ENCODE measurements at regions of chr17 and their contacts with region 1.

Region 1: DNA sequence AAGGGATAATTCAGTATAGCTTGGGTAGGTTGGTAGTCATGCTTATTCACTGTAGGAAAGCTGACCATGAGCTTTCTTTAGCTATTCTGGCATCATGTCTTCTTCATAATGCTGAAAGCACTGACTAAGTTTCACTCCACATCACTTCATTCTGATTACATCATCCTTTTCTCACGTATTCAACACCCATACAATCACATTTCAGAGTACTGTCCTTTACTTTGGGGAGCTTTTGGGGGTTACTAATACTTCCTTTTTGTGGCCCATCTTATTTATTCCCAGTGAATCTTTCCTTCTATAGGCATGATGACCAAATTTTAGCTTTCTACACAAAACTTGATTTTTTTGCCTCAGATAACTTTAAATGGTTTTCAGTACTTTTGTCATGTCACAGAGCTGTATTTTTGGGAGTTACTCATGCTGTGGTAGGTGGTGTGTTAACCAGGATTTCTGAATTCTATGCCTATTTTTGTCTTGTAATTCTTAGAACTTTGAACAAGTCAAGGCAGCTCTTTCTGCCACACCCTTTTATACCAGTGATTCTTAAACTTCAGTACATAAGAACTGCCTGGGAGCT is 23.5 kb downstream of the TADA2A start:
- DNase-seq: no peak
- ATAC-seq: no peak
- H3K4me3 ChIP-seq: no peak overlapping the region
- H3K27ac ChIP-seq: no peak overlapping the region
- H3K4me1 ChIP-seq: no peaks in the 10 kb centered on the region
- H3K27me3 ChIP-seq: no peaks in the 10 kb centered on the region
- CTCF ChIP-seq: no peak

Region 2: GRCh38 chr17:37218849-37219248 is 211.3 kb before region 1 on chr17:
- CTCF ChIA-PET with region 1: interaction called, 15 read pairs
- POLR2A ChIA-PET with region 1: no interaction called
- in situ Hi-C with region 1: no loop called
- intact Hi-C with region 1: no loop called
- DNase-seq: no peak
- ATAC-seq: no peak
- H3K4me3 ChIP-seq: no peak overlapping the region
- H3K27ac ChIP-seq: no peak overlapping the region
- H3K4me1 ChIP-seq: no peaks in the 10 kb centered on the region
- H3K27me3 ChIP-seq: no peaks in the 10 kb centered on the region
- CTCF ChIP-seq: no peak

Region 3: GRCh38 chr17:37392024-37392590 is 38.0 kb before region 1 on chr17:
- CTCF ChIA-PET with region 1: no interaction called
- POLR2A ChIA-PET with region 1: no interaction called
- in situ Hi-C with region 1: no loop called
- intact Hi-C with region 1: no loop called
- DNase-seq: no peak
- ATAC-seq: no peak
- H3K4me3 ChIP-seq: no peak overlapping the region
- H3K27ac ChIP-seq: peak overlapping the region; percentile 17; the same call in 1 of the 2 replicates
- H3K4me1 ChIP-seq: peaks cover 3% of the 10 kb centered on the region; the same call in 1 of the 2 replicates
- H3K27me3 ChIP-seq: no peaks in the 10 kb centered on the region
- CTCF ChIP-seq: no peak

Region 4: DNA sequence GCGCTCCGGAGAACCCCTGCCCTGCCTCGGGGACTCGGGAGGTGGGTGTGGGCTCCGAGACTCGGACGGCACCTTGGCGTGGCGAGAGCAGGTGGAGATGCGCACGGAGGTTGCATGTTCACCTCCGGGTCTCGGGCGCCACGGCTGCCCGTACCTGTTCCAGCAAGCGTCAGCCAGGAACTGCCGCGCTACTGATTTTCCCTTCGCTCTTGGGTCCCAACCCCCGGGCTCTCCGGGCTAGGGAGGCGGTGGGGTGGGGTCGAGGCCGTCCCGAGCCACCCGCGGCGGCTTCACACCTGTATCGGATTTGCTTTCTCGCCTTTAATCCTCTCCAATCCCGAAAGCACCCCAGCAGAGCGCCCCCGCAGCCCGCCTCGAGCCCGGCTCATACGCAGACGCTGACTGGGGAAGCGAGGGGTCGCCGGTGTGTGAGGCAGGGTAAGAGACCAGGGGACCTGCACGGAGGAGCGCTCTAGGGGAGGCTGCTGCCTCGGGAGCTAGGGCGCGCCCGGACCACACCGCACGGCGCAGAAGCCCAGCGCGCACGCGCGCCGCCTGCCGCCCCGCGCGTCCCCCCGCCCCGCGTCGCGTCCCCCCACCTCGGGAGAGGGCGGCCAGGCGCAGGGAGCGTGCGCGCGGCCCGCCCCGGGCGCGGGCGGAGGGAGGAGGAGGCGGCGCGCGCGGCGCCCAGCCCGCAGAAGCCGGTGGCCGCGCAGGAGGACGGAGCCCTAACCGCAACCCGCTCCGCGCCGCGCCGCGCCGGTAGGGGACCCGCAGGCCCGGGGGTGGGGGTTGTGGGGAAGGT is 59.3 kb after region 1 on chr17 and contains the start of gene DUSP14:
- CTCF ChIA-PET with region 1: no interaction called
- POLR2A ChIA-PET with region 1: no interaction called
- in situ Hi-C with region 1: no loop called
- intact Hi-C with region 1: no loop called
- DNase-seq: no peak
- ATAC-seq: peak; percentile 85
- H3K4me3 ChIP-seq: peak within 1 kb of the TSS; percentile 75 to 77
- H3K27ac ChIP-seq: peak within 1 kb of the TSS; percentile 83
- H3K4me1 ChIP-seq: peaks cover 18% of the 10 kb centered on the region
- H3K27me3 ChIP-seq: no peaks in the 10 kb centered on the region
- CTCF ChIP-seq: no peak
- total RNA-seq, gene DUSP14: 23.1 TPM

Region 5: GRCh38 chr17:37517881-37518280 is 87.7 kb after region 1 on chr17:
- CTCF ChIA-PET with region 1: no interaction called
- POLR2A ChIA-PET with region 1: interaction called, 15 read pairs
- in situ Hi-C with region 1: no loop called
- intact Hi-C with region 1: no loop called
- DNase-seq: no peak
- ATAC-seq: no peak
- H3K4me3 ChIP-seq: no peak overlapping the region
- H3K27ac ChIP-seq: no peak overlapping the region
- H3K4me1 ChIP-seq: no peaks in the 10 kb centered on the region
- H3K27me3 ChIP-seq: no peaks in the 10 kb centered on the region
- CTCF ChIP-seq: no peak

Region 6: GRCh38 chr17:37701496-37701898 is 271.4 kb after region 1 on chr17:
- CTCF ChIA-PET with region 1: no interaction called
- POLR2A ChIA-PET with region 1: no interaction called
- in situ Hi-C with region 1: no loop called
- intact Hi-C with region 1: no loop called
- DNase-seq: no peak
- ATAC-seq: 0 out of 2 replicates have a peak, but pooled peaks have one; percentile 65
- H3K4me3 ChIP-seq: no peak overlapping the region
- H3K27ac ChIP-seq: no peak overlapping the region
- H3K4me1 ChIP-seq: no peaks in the 10 kb centered on the region
- H3K27me3 ChIP-seq: no peaks in the 10 kb centered on the region
- CTCF ChIP-seq: peak; percentile 57

Measured in Panc1 (cell line).